Sigmoid colon (tissue), 7 donors: ENCODE measurements at regions of chr5 and their contacts with region 1.

Region 1: DNA sequence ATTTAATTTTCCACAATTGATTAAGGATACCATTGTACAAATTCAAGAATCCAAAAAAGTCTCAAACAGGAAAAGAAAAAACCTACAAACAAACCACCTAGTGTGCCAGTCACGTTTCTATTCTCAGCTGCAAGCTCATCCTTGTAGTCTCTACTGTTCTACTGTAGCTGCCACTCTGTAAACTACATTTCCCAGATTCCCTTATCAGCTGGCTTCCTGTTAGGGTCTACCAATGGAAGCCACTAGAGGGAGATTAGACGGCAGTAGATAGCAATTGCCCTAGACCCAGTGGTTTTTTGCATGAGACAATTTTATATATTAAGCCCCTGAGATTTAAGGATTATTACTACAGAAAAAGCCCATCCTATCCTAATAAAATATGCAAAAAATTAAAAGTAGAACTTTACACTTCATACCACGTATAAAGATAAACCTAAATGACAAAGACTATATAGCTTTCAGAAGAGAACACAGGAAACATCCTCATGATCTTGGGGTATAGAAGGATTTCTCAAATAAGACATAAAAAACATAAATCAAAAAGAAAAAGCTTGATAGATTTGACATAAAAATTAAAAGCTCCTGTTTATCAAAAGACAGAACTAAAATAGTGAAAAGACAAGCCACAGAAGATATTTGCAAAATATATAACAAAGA is 37.4 kb downstream of the P4HA2 start:
- DNase-seq: no peak
- H3K4me3 ChIP-seq: no peak overlapping the region
- H3K27ac ChIP-seq: peak overlapping the region in 1 of 4 donors; percentile 46
- H3K4me1 ChIP-seq: no peaks in the 10 kb centered on the region
- H3K27me3 ChIP-seq: no peaks in the 10 kb centered on the region
- CTCF ChIP-seq: peak; percentile 14 to 84 (median 72)
- EP300 ChIP-seq: no peak
- POLR2A ChIP-seq: no peak

Region 2: DNA sequence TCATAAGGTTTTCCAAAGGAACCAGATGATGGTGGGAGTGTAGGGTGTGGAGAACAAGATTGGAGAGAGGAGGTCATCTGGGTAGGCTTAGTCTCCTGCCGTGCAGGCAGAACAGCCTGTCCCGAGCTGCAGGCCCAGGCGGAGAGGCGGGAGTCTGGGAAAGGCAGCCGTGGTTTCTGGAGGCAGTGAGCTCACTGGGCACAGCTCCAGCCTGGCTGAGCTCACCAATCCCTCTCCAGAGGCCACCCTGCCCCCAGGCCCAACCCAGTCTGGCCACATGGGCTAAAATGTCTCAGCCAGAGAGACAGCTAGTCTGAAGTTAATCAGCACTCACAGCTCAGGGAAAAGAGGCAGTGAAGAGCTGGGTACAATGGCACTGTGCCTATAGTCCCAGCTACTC is 25.0 kb after region 1 on chr5:
- intact Hi-C with region 1: loop called (anchors 2 kb)
- DNase-seq: peak; percentile 99
- H3K4me3 ChIP-seq: no peak overlapping the region
- H3K27ac ChIP-seq: peak overlapping the region; percentile 87 to 94 (median 90)
- H3K4me1 ChIP-seq: peaks cover 0 to 46% (median 37%) of the 10 kb centered on the region in 4 donors
- H3K27me3 ChIP-seq: no peaks in the 10 kb centered on the region
- CTCF ChIP-seq: no peak
- EP300 ChIP-seq: peak in 3 of 4 donors; percentile 29 to 91 (median 80)
- POLR2A ChIP-seq: no peak

Region 3: DNA sequence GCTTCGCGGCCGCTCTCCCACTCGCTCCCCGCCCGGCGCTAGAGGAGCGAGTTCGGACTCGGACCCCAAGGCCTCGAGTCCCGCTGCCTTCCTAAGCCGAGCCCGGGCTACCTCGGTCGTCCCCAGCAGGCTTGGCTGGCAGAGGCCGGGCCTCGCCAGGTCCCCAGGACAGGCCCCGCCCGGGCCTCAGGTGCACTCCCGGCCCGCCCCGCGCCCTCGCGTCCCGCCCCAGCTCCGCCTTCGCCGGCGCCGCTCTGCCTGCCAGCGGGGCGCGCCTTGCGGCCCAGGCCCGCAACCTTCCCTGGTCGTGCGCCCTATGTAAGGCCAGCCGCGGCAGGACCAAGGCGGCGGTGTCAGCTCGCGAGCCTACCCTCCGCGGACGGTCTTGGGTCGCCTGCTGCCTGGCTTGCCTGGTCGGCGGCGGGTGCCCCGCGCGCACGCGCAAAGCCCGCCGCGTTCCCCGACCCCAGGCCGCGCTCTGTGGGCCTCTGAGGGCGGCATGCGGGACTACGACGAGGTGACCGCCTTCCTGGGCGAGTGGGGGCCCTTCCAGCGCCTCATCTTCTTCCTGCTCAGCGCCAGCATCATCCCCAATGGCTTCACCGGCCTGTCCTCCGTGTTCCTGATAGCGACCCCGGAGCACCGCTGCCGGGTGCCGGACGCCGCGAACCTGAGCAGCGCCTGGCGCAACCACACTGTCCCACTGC is 179.3 kb after region 1 on chr5 and contains the start of gene SLC22A5:
- intact Hi-C with region 1: loop called (anchors 5 kb)
- DNase-seq: peak; percentile 74
- H3K4me3 ChIP-seq: peak within 1 kb of the TSS; percentile 60 to 80 (median 76)
- H3K27ac ChIP-seq: peak within 1 kb of the TSS; percentile 83 to 89 (median 87)
- H3K4me1 ChIP-seq: peaks cover 0 to 41% (median 27%) of the 10 kb centered on the region in 4 donors
- H3K27me3 ChIP-seq: no peaks in the 10 kb centered on the region
- CTCF ChIP-seq: no peak
- EP300 ChIP-seq: no peak
- POLR2A ChIP-seq: peak in 1 of 2 donors; percentile 22
- total RNA-seq, gene SLC22A5: 3.6 to 9.9 (median 6.3) TPM